ENCODE measurements at regions of chr17 and their contacts with region 1.

Region 1: GRCh38 chr17:76278952-76279741 is 14.0 kb downstream of the UBALD2 start:
- DNase-seq: peak; percentile 88
- H3K4me3 Mint-ChIP-seq: no peak overlapping the region
- H3K27ac Mint-ChIP-seq: no peak overlapping the region
- H3K4me1 Mint-ChIP-seq: peaks cover 13% of the 10 kb centered on the region
- H3K27me3 Mint-ChIP-seq: no peaks in the 10 kb centered on the region

Region 2: DNA sequence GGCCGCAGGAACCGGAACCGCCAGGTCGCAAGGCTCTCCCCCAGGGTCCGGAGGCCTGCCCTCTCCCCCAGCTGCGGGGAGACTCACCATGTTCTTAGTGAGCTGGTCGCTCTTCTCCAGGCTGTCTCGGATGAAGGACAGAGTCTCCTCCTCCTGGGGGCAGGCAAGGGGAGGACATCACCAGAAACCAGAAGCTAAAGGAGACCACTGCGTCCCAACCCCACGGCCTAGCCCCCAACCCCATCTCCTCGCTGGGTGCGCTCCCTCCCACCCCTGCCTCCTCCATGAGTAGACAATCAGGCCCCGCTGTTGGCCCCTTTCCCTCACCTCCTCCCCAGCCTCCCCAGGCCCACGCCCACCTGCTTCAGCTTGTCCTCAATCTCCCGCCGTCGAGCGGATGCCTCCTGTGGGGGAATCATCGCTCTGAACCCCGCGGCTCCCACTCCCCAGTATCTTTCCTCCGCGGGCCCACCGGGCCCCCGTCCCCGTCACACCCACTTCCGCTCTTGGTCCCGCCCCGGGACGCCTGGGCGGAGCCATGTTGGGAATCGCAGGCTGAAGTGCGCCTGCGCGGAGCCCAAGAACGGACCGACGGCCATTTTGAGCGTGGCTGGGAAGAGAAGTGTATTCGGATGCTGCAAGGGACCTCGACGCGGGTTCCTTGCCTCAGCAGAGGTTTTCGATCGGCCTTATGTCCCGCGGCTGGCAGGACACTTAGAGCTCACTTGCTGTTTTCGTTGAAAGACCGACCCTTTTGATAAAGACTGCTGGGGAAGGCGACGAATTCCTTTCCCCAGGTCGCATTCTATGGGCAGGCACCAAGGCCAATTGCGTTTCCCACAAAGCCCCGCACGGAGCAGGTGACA is 175.6 kb before region 1 on chr17 and contains the start of gene EXOC7:
- CTCF ChIA-PET with region 1: interaction called, 21 read pairs
- POLR2A ChIA-PET with region 1: interaction called, 37 read pairs
- DNase-seq: peak; percentile 94
- H3K4me3 Mint-ChIP-seq: peak within 1 kb of the TSS; percentile 95
- H3K27ac Mint-ChIP-seq: peak within 1 kb of the TSS; percentile 92
- H3K4me1 Mint-ChIP-seq: peaks cover 30% of the 10 kb centered on the region
- H3K27me3 Mint-ChIP-seq: no peaks in the 10 kb centered on the region
- total RNA-seq, gene EXOC7: 119 to 120 TPM

Region 3: GRCh38 chr17:76121932-76122430 is 157.2 kb before region 1 on chr17:
- CTCF ChIA-PET with region 1: interaction called, 187 read pairs
- POLR2A ChIA-PET with region 1: interaction called, 222 read pairs
- DNase-seq: no peak
- H3K4me3 Mint-ChIP-seq: no peak overlapping the region
- H3K27ac Mint-ChIP-seq: peak overlapping the region; percentile 60
- H3K4me1 Mint-ChIP-seq: peaks cover 20% of the 10 kb centered on the region
- H3K27me3 Mint-ChIP-seq: no peaks in the 10 kb centered on the region

Region 4: DNA sequence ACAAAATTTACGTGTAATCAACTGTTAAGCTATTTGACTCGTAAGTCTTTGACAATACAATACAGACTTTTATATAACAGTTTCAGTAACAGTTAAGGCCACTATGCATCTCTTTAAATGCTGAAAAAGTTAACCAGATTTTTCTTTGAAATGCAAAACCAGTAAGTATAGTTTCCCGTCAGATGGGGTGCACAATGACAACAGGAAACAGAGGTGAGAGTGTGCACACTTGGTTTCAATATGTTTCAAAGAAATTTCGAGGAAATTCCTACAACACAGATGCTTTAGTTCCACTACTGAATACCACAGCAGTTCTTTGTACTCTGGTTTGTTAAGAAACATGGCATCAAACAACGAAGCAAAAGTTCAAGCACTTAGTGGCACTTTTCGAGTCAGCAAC is 87.3 kb before region 1 on chr17:
- CTCF ChIA-PET with region 1: interaction called, 16 read pairs
- POLR2A ChIA-PET with region 1: interaction called, 1,244 read pairs
- DNase-seq: peak; percentile 59
- H3K4me3 Mint-ChIP-seq: peak overlapping the region; percentile 62
- H3K27ac Mint-ChIP-seq: peak overlapping the region; percentile 96
- H3K4me1 Mint-ChIP-seq: peaks cover 88% of the 10 kb centered on the region
- H3K27me3 Mint-ChIP-seq: no peaks in the 10 kb centered on the region

Region 5: DNA sequence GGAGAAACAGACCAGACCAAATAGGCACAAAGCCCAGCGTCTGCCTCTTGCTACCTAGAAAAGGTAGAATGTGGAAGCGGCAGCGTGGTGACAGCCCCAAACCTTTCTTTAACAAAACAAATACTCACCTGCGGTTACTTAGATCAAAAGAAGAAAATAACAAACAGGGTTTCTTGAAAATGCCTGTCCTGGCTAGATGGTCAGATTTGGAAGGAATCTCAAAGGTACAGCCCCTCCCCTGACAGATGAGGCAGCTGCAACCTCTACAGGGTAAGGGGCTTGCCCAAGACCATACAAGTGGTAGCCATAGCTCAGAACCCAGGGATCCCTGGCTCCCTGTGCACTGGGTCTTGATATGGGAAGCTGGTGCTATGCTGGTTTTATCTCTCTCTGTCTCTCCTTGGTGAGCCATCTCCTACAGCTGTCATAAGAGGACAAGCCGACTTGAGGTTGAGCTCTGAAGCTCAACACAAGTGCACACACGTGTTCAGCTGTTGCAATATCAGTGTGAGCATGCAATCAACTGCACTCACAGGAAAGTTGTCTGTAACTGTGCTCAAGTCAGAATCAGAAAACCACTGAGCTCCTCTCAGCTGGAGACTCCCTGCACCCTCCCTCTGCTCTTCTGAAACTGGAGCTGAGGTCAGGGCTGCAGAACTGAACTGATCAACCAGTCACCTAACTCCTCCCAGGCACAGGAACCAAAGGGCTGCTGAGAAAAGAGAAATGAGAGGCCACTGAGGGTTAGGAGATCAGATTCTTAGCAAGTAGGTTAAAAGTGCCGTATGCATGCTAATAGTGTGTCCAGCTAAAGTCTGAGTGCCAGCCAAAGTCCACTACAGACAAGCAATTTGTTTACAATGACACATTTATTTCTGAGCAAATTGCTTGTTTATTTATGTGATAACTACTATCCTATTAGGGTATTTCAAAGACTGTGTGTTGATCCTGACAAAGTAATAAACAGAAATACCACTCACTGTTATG is 32.8 kb before region 1 on chr17:
- CTCF ChIA-PET with region 1: interaction called, 15 read pairs
- POLR2A ChIA-PET with region 1: interaction called, 1,335 read pairs
- DNase-seq: peak; percentile 87
- H3K4me3 Mint-ChIP-seq: peak overlapping the region; percentile 32
- H3K27ac Mint-ChIP-seq: peak overlapping the region; percentile 94
- H3K4me1 Mint-ChIP-seq: peaks cover 82% of the 10 kb centered on the region
- H3K27me3 Mint-ChIP-seq: peaks cover 5% of the 10 kb centered on the region

Region 6: GRCh38 chr17:76326306-76326705 is 47.2 kb after region 1 on chr17:
- CTCF ChIA-PET with region 1: no interaction called
- POLR2A ChIA-PET with region 1: no interaction called
- DNase-seq: no peak
- H3K4me3 Mint-ChIP-seq: no peak overlapping the region
- H3K27ac Mint-ChIP-seq: no peak overlapping the region
- H3K4me1 Mint-ChIP-seq: no peaks in the 10 kb centered on the region
- H3K27me3 Mint-ChIP-seq: no peaks in the 10 kb centered on the region

Measured in activated CD4-positive, alpha-beta memory T cell treated with anti-CD3 and anti-CD28 coated beads, Interleukin-2, amount 10 ng/mL, durations not matched to agents 7 days and 5 days (primary cell).